ENCODE measurements at regions of chr1 and their contacts with region 1.

Region 1: GRCh38 chr1:45011837-45012638 is at the start of gene UROD:
- DNase-seq: peak; percentile 79 to 93 (median 90)
- ATAC-seq: peak; percentile 87 to 93 (median 88)
- H3K4me3 ChIP-seq: peak within 1 kb of the TSS; percentile 72 to 99 (median 96)
- H3K27ac ChIP-seq: peak within 1 kb of the TSS; percentile 60 to 92 (median 72)
- H3K4me1 ChIP-seq: peaks cover 0 to 24% (median 6%) of the 10 kb centered on the region in 3 donors
- H3K27me3 ChIP-seq: no peaks in the 10 kb centered on the region
- CTCF ChIP-seq: no peak
- total RNA-seq, gene UROD: 16.9 to 36.6 (median 25.7) TPM

Region 2: DNA sequence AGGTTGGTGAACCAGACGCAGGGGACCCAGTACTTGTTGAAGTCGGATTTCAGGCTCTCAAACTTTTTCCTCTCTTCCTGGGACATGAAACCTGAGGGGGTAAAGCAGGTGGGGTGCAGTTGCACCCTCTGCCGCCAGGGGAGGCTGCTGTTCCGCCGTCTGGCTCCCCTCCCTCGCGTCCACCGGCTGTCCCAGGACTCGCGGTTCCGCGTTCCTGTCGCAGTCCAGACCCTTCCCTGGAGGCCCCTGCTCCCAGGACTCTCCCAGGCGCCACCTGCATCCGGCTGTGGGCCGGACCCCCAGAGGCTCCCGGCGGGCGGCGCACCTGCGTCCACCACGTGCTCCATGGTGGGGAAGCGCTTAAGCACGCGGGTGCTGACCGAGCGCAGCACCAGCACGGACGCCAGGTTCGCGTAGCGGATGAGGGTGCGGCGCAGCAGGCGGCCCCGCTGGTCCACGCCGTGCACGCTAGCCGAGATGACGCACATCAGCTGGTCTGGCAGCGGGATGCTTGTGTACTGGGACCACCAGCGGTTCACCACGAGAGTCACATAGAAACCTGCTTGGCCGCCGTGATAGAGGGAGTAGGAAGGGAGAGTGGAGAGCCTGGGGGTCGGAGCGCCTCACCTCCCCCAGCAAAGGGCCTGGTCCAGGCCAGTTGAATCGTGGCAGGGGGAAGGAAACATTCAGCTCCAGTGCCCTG is 225.7 kb before region 1 on chr1:
- intact Hi-C with region 1: loop called in 1 of 3 experiments (anchors 5 kb)
- DNase-seq: peak; percentile 70 to 94 (median 86)
- ATAC-seq: peak; percentile 82 to 92 (median 88)
- H3K4me3 ChIP-seq: peak overlapping the region; percentile 10 to 53 (median 39)
- H3K27ac ChIP-seq: peak overlapping the region; percentile 43 to 61 (median 52)
- H3K4me1 ChIP-seq: peaks cover 0 to 10% (median 0%) of the 10 kb centered on the region in 3 donors
- H3K27me3 ChIP-seq: no peaks in the 10 kb centered on the region
- CTCF ChIP-seq: peak; percentile 96 to 100 (median 99)

Region 3: GRCh38 chr1:44835738-44836675 is 176.0 kb before region 1 on chr1:
- intact Hi-C with region 1: loop called in 1 of 3 experiments (anchors 10 kb)
- DNase-seq: peak; percentile 74 to 91 (median 86)
- ATAC-seq: peak; percentile 89 to 97 (median 95)
- H3K4me3 ChIP-seq: no peak overlapping the region
- H3K27ac ChIP-seq: no peak overlapping the region
- H3K4me1 ChIP-seq: no peaks in the 10 kb centered on the region
- H3K27me3 ChIP-seq: no peaks in the 10 kb centered on the region
- CTCF ChIP-seq: peak; percentile 71 to 85 (median 82)

Region 4: DNA sequence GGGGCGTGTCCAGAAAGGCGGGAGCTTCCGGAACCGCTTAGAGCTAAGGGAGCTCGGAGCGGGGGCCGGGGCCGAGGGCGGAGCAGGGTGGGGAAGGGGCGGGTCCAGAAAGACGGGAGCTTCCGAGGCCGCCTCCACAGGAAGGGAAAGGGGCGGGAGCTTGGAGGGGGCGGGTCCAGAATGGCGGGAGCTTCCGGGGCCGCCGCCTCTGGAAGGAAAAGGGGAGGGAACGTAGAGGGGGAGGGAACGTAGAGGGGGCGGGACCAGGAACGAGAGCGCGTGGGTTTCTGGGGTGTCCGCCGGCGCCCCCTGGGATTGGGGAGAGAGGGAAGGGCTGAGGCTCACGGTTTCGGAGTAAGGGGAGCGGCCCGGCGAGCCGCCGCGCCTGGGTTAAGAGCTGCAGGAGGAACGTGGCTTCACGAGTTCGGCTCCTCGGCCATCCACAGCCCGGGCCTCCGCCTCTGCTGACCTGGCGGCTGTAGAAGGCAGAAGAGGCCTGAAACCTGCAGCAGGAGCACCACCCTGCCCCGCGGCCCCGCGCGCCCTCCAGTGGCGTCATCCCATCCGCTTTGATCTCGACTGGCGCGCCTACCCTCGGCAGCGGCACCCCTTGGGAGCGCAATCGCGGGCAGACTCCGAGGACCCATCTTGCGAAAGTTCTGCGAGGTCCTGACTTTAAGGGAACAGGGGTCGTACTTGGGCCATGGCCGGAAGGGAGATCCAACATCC is 291.7 kb after region 1 on chr1:
- intact Hi-C with region 1: loop called in 2 of 3 experiments (anchors 2 to 5 kb)
- DNase-seq: peak; percentile 97 to 99 (median 99)
- ATAC-seq: peak; percentile 92 to 95 (median 94)
- H3K4me3 ChIP-seq: peak overlapping the region; percentile 45 to 72 (median 69)
- H3K27ac ChIP-seq: peak overlapping the region; percentile 74 to 92 (median 90)
- H3K4me1 ChIP-seq: peaks cover 4 to 5% (median 4%) of the 10 kb centered on the region in 3 donors
- H3K27me3 ChIP-seq: no peaks in the 10 kb centered on the region
- CTCF ChIP-seq: peak; percentile 25 to 52 (median 44)